Left lung (tissue), 14 donors: ENCODE measurements at regions of chr14 and their contacts with region 1.

Region 1: GRCh38 chr14:34120238-34120977 is 169.5 kb upstream of the EGLN3 start:
- DNase-seq: no peak
- ATAC-seq: no peak
- H3K4me3 ChIP-seq: no peak overlapping the region
- H3K27ac ChIP-seq: no peak overlapping the region
- H3K4me1 ChIP-seq: no peaks in the 10 kb centered on the region
- H3K27me3 ChIP-seq: peaks cover 8 to 51% of the 10 kb centered on the region in 2 donors
- CTCF ChIP-seq: no peak

Region 2: GRCh38 chr14:34227834-34228649 is 107.6 kb after region 1 on chr14:
- intact Hi-C with region 1: loop called in 1 of 2 experiments (anchors 10 kb)
- DNase-seq: peak; percentile 43 to 68 (median 58)
- ATAC-seq: peak; percentile 99
- H3K4me3 ChIP-seq: no peak overlapping the region
- H3K27ac ChIP-seq: no peak overlapping the region
- H3K4me1 ChIP-seq: peaks cover 0 to 2% of the 10 kb centered on the region in 2 donors
- H3K27me3 ChIP-seq: peaks cover 0 to 3% of the 10 kb centered on the region in 2 donors
- CTCF ChIP-seq: peak; percentile 80 to 84